T-cell (primary cell): ENCODE measurements at regions of chr5 and their contacts with region 1.

Region 1: GRCh38 chr5:97844801-97845200 is 661.8 kb upstream of the RIOK2 start:
- DNase-seq: no peak
- ATAC-seq: no peak
- H3K4me3 ChIP-seq: no peak overlapping the region
- H3K4me3 Mint-ChIP-seq: no peak overlapping the region
- H3K27ac ChIP-seq: no peak overlapping the region
- H3K27ac Mint-ChIP-seq: no peak overlapping the region
- H3K4me1 ChIP-seq: no peaks in the 10 kb centered on the region
- H3K4me1 Mint-ChIP-seq: no peaks in the 10 kb centered on the region
- H3K27me3 ChIP-seq: no peaks in the 10 kb centered on the region
- H3K27me3 Mint-ChIP-seq: no peaks in the 10 kb centered on the region

Region 2: DNA sequence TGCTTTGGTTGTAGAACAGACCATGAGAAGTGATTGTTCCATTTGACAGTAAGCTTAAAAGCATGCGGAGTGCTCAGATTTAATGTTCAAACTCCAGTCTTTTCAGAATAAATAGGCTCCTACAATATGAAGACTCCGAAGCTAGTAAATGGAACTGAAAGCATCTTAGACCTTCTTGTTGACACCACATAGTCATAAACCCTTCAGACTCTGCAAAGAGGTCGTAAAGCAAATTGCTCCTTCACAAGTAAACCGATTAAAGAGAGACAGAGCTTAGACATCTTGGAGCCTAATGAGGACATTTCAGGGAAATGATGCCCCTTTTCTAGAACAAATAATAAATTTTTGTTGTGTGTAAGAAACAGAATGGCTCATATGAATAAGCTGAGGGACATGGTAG is 150.7 kb before region 1 on chr5:
- CTCF ChIA-PET with region 1: no interaction called
- POLR2A ChIA-PET with region 1: no interaction called
- DNase-seq: no peak
- ATAC-seq: no peak
- H3K4me3 ChIP-seq: no peak overlapping the region
- H3K4me3 Mint-ChIP-seq: no peak overlapping the region
- H3K27ac ChIP-seq: no peak overlapping the region
- H3K27ac Mint-ChIP-seq: no peak overlapping the region
- H3K4me1 ChIP-seq: no peaks in the 10 kb centered on the region
- H3K4me1 Mint-ChIP-seq: no peaks in the 10 kb centered on the region
- H3K27me3 ChIP-seq: no peaks in the 10 kb centered on the region
- H3K27me3 Mint-ChIP-seq: no peaks in the 10 kb centered on the region

Region 3: GRCh38 chr5:97820146-97820545 is 24.7 kb before region 1 on chr5:
- CTCF ChIA-PET with region 1: no interaction called
- POLR2A ChIA-PET with region 1: no interaction called
- DNase-seq: no peak
- ATAC-seq: no peak
- H3K4me3 ChIP-seq: no peak overlapping the region
- H3K4me3 Mint-ChIP-seq: no peak overlapping the region
- H3K27ac ChIP-seq: no peak overlapping the region
- H3K27ac Mint-ChIP-seq: no peak overlapping the region
- H3K4me1 ChIP-seq: no peaks in the 10 kb centered on the region
- H3K4me1 Mint-ChIP-seq: no peaks in the 10 kb centered on the region
- H3K27me3 ChIP-seq: no peaks in the 10 kb centered on the region
- H3K27me3 Mint-ChIP-seq: no peaks in the 10 kb centered on the region

Region 4: GRCh38 chr5:97854871-97855762 is 10.3 kb after region 1 on chr5:
- CTCF ChIA-PET with region 1: no interaction called
- POLR2A ChIA-PET with region 1: interaction called in 1 of 2 experiments, 12 read pairs
- DNase-seq: no peak
- ATAC-seq: no peak
- H3K4me3 ChIP-seq: no peak overlapping the region
- H3K4me3 Mint-ChIP-seq: no peak overlapping the region
- H3K27ac ChIP-seq: no peak overlapping the region
- H3K27ac Mint-ChIP-seq: no peak overlapping the region
- H3K4me1 ChIP-seq: no peaks in the 10 kb centered on the region
- H3K4me1 Mint-ChIP-seq: no peaks in the 10 kb centered on the region
- H3K27me3 ChIP-seq: no peaks in the 10 kb centered on the region
- H3K27me3 Mint-ChIP-seq: no peaks in the 10 kb centered on the region

Region 5: DNA sequence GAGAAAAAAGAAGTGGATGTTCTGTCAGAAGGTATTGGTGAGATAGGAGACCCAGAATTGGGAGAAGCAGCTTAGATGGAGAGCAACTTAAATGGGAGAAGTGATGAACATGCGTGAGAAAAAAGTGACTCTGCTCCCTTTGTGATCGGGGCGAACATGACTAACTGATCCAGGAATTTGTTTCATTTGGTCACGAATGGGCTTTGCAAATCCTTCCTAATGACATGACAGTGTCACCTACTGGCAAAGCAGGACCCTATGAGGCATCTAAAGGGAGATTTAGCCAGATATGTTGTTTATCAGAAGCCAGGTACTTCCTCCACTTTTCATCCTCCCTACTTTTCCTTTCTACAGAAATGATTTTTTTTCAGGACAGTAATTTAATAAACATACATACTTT is 141.3 kb after region 1 on chr5:
- CTCF ChIA-PET with region 1: no interaction called
- POLR2A ChIA-PET with region 1: no interaction called
- DNase-seq: no peak
- ATAC-seq: no peak
- H3K4me3 ChIP-seq: no peak overlapping the region
- H3K4me3 Mint-ChIP-seq: no peak overlapping the region
- H3K27ac ChIP-seq: no peak overlapping the region
- H3K27ac Mint-ChIP-seq: no peak overlapping the region
- H3K4me1 ChIP-seq: no peaks in the 10 kb centered on the region
- H3K4me1 Mint-ChIP-seq: no peaks in the 10 kb centered on the region
- H3K27me3 ChIP-seq: no peaks in the 10 kb centered on the region
- H3K27me3 Mint-ChIP-seq: no peaks in the 10 kb centered on the region

Region 6: DNA sequence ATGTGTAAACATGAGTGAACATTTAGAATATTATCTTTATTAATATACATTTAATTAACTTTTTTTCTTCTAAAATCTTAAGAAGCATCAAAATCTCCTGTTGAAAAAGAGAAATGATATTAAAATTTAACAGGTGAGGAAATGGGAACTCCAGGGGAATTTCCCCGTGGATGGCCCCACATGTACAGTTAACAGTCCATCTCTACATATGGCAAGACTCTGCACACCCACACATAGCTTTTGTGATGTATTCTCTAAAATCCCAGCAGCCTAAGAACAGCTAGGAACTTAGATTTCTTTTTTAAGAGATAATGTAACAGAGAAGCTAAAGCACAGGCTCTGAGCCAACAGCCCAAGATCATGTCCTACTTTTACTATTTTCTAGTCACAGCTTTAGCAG is 372.3 kb after region 1 on chr5:
- CTCF ChIA-PET with region 1: no interaction called
- POLR2A ChIA-PET with region 1: no interaction called
- DNase-seq: no peak
- ATAC-seq: no peak
- H3K4me3 ChIP-seq: no peak overlapping the region
- H3K4me3 Mint-ChIP-seq: no peak overlapping the region
- H3K27ac ChIP-seq: no peak overlapping the region
- H3K27ac Mint-ChIP-seq: no peak overlapping the region
- H3K4me1 ChIP-seq: no peaks in the 10 kb centered on the region
- H3K4me1 Mint-ChIP-seq: peaks cover 0 to 5% (median 4%) of the 10 kb centered on the region in 3 donors
- H3K27me3 ChIP-seq: no peaks in the 10 kb centered on the region
- H3K27me3 Mint-ChIP-seq: no peaks in the 10 kb centered on the region